AG04449 (cell line): ENCODE measurements at regions of chr1 and their contacts with region 1.

Region 1: DNA sequence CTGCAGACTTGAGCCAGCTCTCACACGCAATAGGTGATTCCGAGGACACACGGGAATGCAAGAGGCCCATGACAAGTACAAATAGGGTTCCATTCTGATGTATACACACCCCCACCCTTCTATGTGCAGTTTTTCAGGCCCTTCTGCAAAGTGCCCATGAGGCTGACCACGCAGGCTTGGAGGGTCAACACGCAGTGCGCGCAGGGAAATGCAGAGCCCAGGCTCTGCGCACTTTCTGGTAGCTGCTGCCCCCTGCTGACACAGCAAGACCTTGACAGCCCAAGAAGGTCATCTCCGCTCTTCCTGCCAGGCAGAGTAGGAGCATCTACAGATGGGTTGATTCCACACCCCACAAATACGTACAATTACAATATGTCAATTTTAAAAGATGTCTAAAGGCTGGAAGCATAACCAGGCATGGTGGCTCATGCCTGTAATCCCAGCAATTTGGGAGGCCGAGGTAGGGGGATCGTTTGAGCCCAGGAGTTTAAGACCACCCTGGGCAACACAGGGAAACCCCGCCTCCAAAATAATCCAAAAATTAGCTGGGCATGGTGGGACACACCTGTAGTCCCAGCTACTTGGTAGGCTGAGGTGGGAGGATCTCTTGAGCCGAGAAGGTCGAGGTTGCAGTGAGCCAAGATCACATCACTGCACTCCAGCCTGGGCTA is 18.5 kb downstream of the SH3BP5L start:
- DNase-seq: no peak
- H3K4me3 ChIP-seq: no peak overlapping the region
- CTCF ChIP-seq: peak; percentile 77

Region 2: GRCh38 chr1:248585266-248585665 is 221.9 kb before region 1 on chr1:
- CTCF ChIA-PET with region 1: no interaction called
- POLR2A ChIA-PET with region 1: no interaction called
- DNase-seq: no peak
- H3K4me3 ChIP-seq: no peak overlapping the region
- CTCF ChIP-seq: no peak

Region 3: GRCh38 chr1:248622570-248623001 is 184.6 kb before region 1 on chr1:
- CTCF ChIA-PET with region 1: interaction called, 19 read pairs
- POLR2A ChIA-PET with region 1: no interaction called
- DNase-seq: no peak
- H3K4me3 ChIP-seq: no peak overlapping the region
- CTCF ChIP-seq: peak; percentile 12

Region 4: DNA sequence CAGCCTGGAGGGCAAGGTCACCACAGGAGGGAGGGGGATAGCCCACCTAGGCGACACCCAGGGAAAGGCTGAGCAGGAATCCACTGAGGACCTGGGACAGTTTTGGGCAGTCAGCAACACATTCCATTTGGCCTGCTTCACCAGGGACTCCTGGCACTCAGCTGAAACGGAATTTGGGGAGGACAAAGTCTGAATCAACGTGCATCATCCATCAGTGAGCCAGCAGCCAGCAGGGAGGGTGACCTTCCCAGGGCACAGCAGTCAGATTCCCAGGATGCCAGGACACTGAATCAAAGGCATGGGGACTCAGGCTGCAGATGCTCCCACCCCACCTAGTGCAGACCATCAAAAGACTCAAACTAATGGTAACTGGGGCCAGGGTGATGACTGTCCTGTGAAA is 13.9 kb after region 1 on chr1:
- CTCF ChIA-PET with region 1: interaction called, 10 read pairs
- POLR2A ChIA-PET with region 1: interaction called, 5 read pairs
- DNase-seq: no peak
- H3K4me3 ChIP-seq: peak overlapping the region; percentile 25; the same call in 1 of the 2 replicates
- CTCF ChIP-seq: no peak